HepG2 (cell line): ENCODE measurements at regions of chr18 and their contacts with region 1.

Region 1: GRCh38 chr18:48030616-48031480 is 100.4 kb upstream of the SMAD2 start:
- DNase-seq: peak; percentile 48
- ATAC-seq: peak; percentile 94
- H3K4me3 ChIP-seq: no peak overlapping the region
- H3K27ac ChIP-seq: no peak overlapping the region
- H3K4me1 ChIP-seq: no peaks in the 10 kb centered on the region
- H3K27me3 ChIP-seq: peaks cover 0 to 16% of the 10 kb centered on the region in 2 experiments; a peak in 3 of 5 replicates
- CTCF ChIP-seq: peak; percentile 85
- EP300 ChIP-seq: no peak
- POLR2A ChIP-seq: no peak
- RAD21 ChIP-seq: peak; percentile 59

Region 2: DNA sequence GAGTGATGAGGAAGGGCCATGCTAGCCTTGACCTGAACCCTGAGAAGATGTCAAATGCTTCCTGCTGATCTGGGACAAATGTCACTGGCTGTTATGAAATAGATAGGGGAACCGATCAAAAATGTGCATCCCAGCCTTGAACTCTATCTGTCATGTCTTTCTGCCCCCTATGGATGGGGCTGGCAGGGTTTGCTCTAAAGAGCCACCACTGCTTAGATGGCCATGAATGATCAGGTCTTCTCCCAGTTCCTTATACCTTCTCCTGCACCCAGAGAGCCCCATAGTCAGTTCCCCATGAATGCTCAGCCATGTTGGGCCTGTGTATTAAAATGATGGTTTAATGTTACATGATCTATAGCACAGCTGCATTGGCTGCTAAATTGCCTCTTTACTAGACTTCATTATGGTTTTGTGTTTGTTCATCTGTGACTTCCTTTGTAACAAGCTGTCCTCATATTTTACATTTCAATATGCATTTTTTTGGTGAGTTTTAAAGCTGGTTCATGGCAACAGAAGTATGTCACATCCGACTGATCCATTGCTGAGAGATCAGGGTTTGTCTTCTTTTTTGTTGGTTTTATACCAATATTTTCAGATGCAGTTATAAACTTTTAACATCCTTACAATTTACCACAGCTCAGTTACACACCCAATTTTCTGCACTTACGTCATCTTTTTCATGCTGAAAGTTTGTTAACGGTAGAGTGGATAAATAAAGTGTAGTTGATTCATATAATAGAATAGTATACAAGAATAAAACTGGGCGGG is 44.0 kb before region 1 on chr18:
- CTCF ChIA-PET with region 1: no interaction called
- POLR2A ChIA-PET with region 1: no interaction called
- in situ Hi-C with region 1: no loop called
- intact Hi-C with region 1: no loop called
- DNase-seq: no peak
- ATAC-seq: no peak
- H3K4me3 ChIP-seq: no peak overlapping the region
- H3K27ac ChIP-seq: no peak overlapping the region
- H3K4me1 ChIP-seq: no peaks in the 10 kb centered on the region
- H3K27me3 ChIP-seq: peaks cover 0 to 4% of the 10 kb centered on the region in 2 experiments; a peak in 2 of 5 replicates
- CTCF ChIP-seq: no peak
- EP300 ChIP-seq: no peak
- POLR2A ChIP-seq: no peak
- RAD21 ChIP-seq: no peak

Region 3: GRCh38 chr18:48073231-48073930 is 42.5 kb after region 1 on chr18:
- CTCF ChIA-PET with region 1: no interaction called
- POLR2A ChIA-PET with region 1: no interaction called
- in situ Hi-C with region 1: no loop called
- intact Hi-C with region 1: no loop called
- DNase-seq: no peak
- ATAC-seq: peak; percentile 29; the same call in 1 of the 3 replicates
- H3K4me3 ChIP-seq: no peak overlapping the region
- H3K27ac ChIP-seq: no peak overlapping the region
- H3K4me1 ChIP-seq: no peaks in the 10 kb centered on the region
- H3K27me3 ChIP-seq: peaks cover 4 to 32% of the 10 kb centered on the region in 2 experiments; a peak in 3 of 5 replicates
- CTCF ChIP-seq: no peak
- EP300 ChIP-seq: no peak
- POLR2A ChIP-seq: no peak
- RAD21 ChIP-seq: no peak

Region 4: DNA sequence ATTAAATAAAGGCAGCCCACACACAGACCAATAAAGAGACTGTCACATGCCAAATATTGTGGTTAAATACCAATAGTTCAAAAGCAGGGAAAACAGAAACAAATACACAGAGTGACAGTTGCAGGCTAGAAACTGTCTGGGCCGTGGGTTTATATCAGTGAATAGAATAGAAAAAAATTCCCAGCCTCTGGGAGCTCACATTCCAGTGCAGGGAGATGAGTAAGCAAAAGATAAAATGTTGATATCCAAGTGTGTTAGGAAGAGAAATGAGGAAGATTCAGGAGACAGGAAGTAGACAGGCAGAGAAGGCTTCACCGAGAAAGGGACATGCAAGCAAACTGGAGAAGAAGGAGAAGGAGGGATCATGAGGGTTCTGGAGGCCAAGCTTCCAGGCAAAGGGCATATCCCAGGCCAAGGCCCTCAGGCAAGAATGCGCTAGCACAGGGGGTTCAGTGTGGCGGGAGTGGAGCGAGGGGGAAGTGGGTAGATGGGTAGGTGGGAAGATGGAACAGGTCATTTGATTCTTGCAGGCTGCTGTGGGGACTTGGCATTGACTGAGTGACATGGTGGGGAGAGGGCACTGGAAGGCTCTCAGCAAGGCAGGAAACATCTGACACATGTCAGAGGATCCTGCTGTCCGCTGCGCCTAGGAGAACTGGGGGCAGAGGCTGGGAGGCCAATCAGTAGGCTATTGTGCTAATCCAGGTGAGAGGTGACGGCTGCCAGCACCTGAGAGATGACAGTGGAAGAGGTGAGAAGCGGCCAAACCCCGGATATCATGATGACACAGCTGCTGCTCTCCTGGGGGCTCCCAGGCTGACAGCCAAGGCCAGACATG is 289.2 kb after region 1 on chr18:
- CTCF ChIA-PET with region 1: no interaction called
- POLR2A ChIA-PET with region 1: no interaction called
- in situ Hi-C with region 1: no loop called
- intact Hi-C with region 1: no loop called
- DNase-seq: no peak
- ATAC-seq: no peak
- H3K4me3 ChIP-seq: no peak overlapping the region
- H3K27ac ChIP-seq: no peak overlapping the region
- H3K4me1 ChIP-seq: no peaks in the 10 kb centered on the region
- H3K27me3 ChIP-seq: peaks cover 2% of the 10 kb centered on the region in 2 experiments; a peak in 2 of 5 replicates
- CTCF ChIP-seq: no peak
- EP300 ChIP-seq: no peak
- POLR2A ChIP-seq: no peak
- RAD21 ChIP-seq: no peak

Region 5: GRCh38 chr18:48345596-48345995 is 314.7 kb after region 1 on chr18:
- CTCF ChIA-PET with region 1: interaction called, 5 read pairs
- POLR2A ChIA-PET with region 1: no interaction called
- in situ Hi-C with region 1: loop called (anchors 10 kb)
- intact Hi-C with region 1: no loop called
- DNase-seq: no peak
- ATAC-seq: 0 out of 3 replicates have a peak, but pooled peaks have one; percentile 37
- H3K4me3 ChIP-seq: no peak overlapping the region
- H3K27ac ChIP-seq: no peak overlapping the region
- H3K4me1 ChIP-seq: no peaks in the 10 kb centered on the region
- H3K27me3 ChIP-seq: peaks cover 1 to 41% of the 10 kb centered on the region in 2 experiments; a peak in 4 of 5 replicates
- CTCF ChIP-seq: peak; percentile 44
- EP300 ChIP-seq: no peak
- POLR2A ChIP-seq: no peak
- RAD21 ChIP-seq: no peak

Region 6: DNA sequence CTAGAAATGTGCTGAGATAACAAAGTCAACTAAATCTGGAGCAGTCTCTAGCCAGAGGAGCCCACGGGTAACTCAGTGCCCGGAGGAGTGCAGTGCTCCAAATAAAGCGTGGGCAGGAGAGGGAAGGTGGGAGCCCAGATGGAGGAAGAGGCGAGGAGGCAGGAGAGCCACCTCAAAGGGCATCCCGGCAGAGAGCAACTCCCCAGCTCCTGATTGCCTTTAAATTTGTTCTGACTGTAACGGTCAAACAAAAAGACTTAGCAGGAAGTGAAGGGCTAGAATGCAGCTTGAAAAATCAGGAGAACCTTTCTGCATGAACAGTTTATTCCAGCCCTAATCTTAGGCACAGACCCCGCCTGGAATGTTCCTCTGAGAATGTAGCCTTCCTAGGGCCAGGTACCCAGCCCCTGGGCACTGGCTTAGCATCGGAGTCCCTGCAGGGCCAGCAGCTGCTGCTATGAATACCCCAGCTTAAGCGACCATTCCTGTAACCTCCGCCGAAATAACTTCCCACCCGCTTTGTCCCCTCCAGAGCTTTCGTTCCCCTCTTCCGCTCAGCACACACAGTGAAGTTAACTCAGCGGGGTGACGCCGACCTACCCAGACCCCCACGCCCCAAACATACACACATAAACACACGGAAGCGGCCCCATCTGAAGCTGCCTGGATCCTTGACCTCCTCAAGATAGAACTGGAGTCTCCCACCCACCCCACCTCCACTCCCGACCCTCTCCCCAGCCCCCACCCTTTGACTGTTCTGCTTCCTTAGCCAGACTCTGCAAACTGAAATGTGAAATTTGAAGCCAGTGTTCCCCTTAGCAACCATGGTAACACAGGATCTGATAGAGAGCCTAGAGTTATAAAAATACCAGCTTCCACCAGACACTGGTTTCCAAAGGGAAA is 796.7 kb after region 1 on chr18:
- CTCF ChIA-PET with region 1: no interaction called
- POLR2A ChIA-PET with region 1: no interaction called
- in situ Hi-C with region 1: no loop called
- intact Hi-C with region 1: no loop called
- DNase-seq: no peak
- ATAC-seq: no peak
- H3K4me3 ChIP-seq: no peak overlapping the region
- H3K27ac ChIP-seq: no peak overlapping the region
- H3K4me1 ChIP-seq: no peaks in the 10 kb centered on the region
- H3K27me3 ChIP-seq: no peaks in the 10 kb centered on the region
- CTCF ChIP-seq: no peak
- EP300 ChIP-seq: no peak
- POLR2A ChIP-seq: no peak
- RAD21 ChIP-seq: no peak